SK-N-SH (cell line): ENCODE measurements at regions of chr3 and their contacts with region 1.

Region 1: GRCh38 chr3:123028233-123028828 is 768 bp upstream of the SEMA5B start:
- DNase-seq: peak; percentile 79
- H3K4me3 ChIP-seq: peak overlapping the region; percentile 50 to 63
- H3K27ac ChIP-seq: no peak overlapping the region
- H3K4me1 ChIP-seq: peaks cover 0 to 23% of the 10 kb centered on the region in 2 experiments; a peak in 2 of 4 replicates
- H3K27me3 ChIP-seq: peaks cover 45% of the 10 kb centered on the region
- CTCF ChIP-seq: peak; percentile 76
- EP300 ChIP-seq: no peak
- RAD21 ChIP-seq: peak; percentile 92

Region 2: DNA sequence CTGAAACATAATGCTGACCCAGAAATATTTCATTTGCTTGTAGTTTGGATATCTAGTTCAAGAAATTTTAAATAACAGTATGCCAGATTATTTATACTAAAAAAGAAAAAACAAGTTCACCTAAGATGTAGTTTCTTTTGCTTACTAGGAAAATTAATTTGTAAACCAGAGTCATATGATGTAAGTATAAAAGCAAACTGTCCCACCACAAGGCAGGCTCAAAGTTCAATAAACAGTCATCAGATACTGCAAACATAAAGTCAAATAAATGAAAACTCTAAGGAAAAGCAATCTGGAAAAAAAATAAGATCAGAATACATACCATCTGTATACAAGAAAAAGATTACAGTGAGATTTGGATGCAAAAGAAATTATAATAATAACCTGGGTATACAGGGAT is 572.3 kb before region 1 on chr3:
- CTCF ChIA-PET with region 1: no interaction called
- POLR2A ChIA-PET with region 1: no interaction called
- DNase-seq: no peak
- H3K4me3 ChIP-seq: no peak overlapping the region
- H3K27ac ChIP-seq: no peak overlapping the region
- H3K4me1 ChIP-seq: no peaks in the 10 kb centered on the region
- H3K27me3 ChIP-seq: no peaks in the 10 kb centered on the region
- CTCF ChIP-seq: no peak
- EP300 ChIP-seq: no peak
- RAD21 ChIP-seq: no peak

Region 3: GRCh38 chr3:122929190-122930062 is 98.9 kb before region 1 on chr3:
- CTCF ChIA-PET with region 1: interaction called, 342 read pairs
- POLR2A ChIA-PET with region 1: no interaction called
- DNase-seq: peak; percentile 65
- H3K4me3 ChIP-seq: no peak overlapping the region
- H3K27ac ChIP-seq: peak overlapping the region in 1 of 2 experiments; percentile 59; a peak in 2 of 4 replicates
- H3K4me1 ChIP-seq: peaks cover 0 to 23% of the 10 kb centered on the region in 2 experiments; a peak in 1 of 4 replicates
- H3K27me3 ChIP-seq: no peaks in the 10 kb centered on the region
- CTCF ChIP-seq: no peak
- EP300 ChIP-seq: peak in 1 of 2 experiments; percentile 9; a peak in 1 of 4 replicates
- RAD21 ChIP-seq: no peak

Region 4: GRCh38 chr3:122969585-122970453 is 58.5 kb before region 1 on chr3:
- CTCF ChIA-PET with region 1: interaction called, 29 read pairs
- POLR2A ChIA-PET with region 1: interaction called, 3 read pairs
- DNase-seq: no peak
- H3K4me3 ChIP-seq: no peak overlapping the region
- H3K27ac ChIP-seq: no peak overlapping the region
- H3K4me1 ChIP-seq: peaks cover 15 to 36% of the 10 kb centered on the region in 2 experiments
- H3K27me3 ChIP-seq: no peaks in the 10 kb centered on the region
- CTCF ChIP-seq: no peak
- EP300 ChIP-seq: no peak
- RAD21 ChIP-seq: no peak

Region 5: GRCh38 chr3:122993124-122993978 is 35.0 kb before region 1 on chr3:
- CTCF ChIA-PET with region 1: interaction called, 20 read pairs
- POLR2A ChIA-PET with region 1: interaction called, 4 read pairs
- DNase-seq: peak; percentile 70
- H3K4me3 ChIP-seq: peak overlapping the region in 1 of 2 experiments; percentile 6; a peak in 1 of 4 replicates
- H3K27ac ChIP-seq: peak overlapping the region in 1 of 2 experiments; percentile 62; a peak in 2 of 4 replicates
- H3K4me1 ChIP-seq: peaks cover 0 to 37% of the 10 kb centered on the region in 2 experiments; a peak in 1 of 4 replicates
- H3K27me3 ChIP-seq: peaks cover 13% of the 10 kb centered on the region; the same call in 1 of the 2 replicates
- CTCF ChIP-seq: no peak
- EP300 ChIP-seq: no peak
- RAD21 ChIP-seq: 0 out of 2 replicates have a peak, but pooled peaks have one; percentile 4

Region 6: DNA sequence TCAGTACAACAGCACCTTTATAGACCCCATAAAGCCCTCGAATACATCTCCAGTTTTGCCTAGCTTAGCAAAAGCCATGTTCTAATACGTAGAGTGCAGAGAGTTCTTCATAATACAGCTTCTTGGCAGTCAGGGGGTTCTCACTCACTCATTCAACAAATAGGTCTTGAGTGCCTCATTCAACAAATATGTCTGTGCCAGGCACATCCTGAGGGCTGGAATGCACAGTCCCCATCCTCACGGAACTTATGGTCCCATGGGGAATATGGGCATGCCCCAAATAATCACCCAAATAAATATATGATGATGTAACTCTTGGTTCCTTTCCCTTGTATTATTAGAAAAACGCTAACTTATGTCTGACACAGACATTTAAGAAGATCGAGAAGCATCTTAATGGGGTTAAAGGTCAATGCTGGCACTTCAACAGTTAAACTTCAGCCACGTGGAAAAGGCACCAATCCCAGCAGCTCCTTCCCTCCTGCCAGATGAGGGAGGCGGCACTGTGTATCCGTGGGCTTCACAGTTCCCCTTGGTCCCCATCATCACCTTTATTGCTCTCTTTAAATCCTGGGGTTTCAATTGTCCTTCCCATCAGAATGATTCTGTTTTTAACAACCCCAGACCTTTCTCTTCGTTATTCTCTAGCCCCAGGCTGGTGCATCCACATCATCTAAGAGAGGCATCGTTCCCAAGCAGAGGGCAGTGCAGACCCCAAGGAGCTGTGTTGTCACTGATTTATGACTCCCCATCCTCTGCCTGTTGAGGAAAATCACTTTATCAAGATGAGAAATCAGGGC is 18.1 kb after region 1 on chr3:
- CTCF ChIA-PET with region 1: interaction called, 84 read pairs
- POLR2A ChIA-PET with region 1: no interaction called
- DNase-seq: no peak
- H3K4me3 ChIP-seq: no peak overlapping the region
- H3K27ac ChIP-seq: no peak overlapping the region
- H3K4me1 ChIP-seq: peaks cover 10 to 35% of the 10 kb centered on the region in 2 experiments; a peak in 2 of 4 replicates
- H3K27me3 ChIP-seq: no peaks in the 10 kb centered on the region
- CTCF ChIP-seq: no peak
- EP300 ChIP-seq: no peak
- RAD21 ChIP-seq: no peak

Region 7: GRCh38 chr3:123421353-123422174 is 393.2 kb after region 1 on chr3:
- CTCF ChIA-PET with region 1: no interaction called
- POLR2A ChIA-PET with region 1: no interaction called
- DNase-seq: peak; percentile 69
- H3K4me3 ChIP-seq: no peak overlapping the region
- H3K27ac ChIP-seq: peak overlapping the region in 1 of 2 experiments; percentile 72; a peak in 2 of 4 replicates
- H3K4me1 ChIP-seq: peaks cover 0 to 27% of the 10 kb centered on the region in 2 experiments; a peak in 1 of 4 replicates
- H3K27me3 ChIP-seq: no peaks in the 10 kb centered on the region; the same call in 1 of the 2 replicates
- CTCF ChIP-seq: no peak
- EP300 ChIP-seq: no peak
- RAD21 ChIP-seq: no peak